Common myeloid progenitor, CD34-positive (primary cell): ENCODE measurements at regions of chr4 and their contacts with region 1.

Region 1: GRCh38 chr4:101187841-101188240 is 159.5 kb downstream of the PPP3CA start:
- DNase-seq: peak; percentile 25 to 40 (median 40)
- H3K4me3 ChIP-seq: no peak overlapping the region
- H3K27ac ChIP-seq: no peak overlapping the region
- H3K4me1 ChIP-seq: peaks cover 0 to 6% (median 3%) of the 10 kb centered on the region in 4 experiments
- H3K27me3 ChIP-seq: no peaks in the 10 kb centered on the region

Region 2: DNA sequence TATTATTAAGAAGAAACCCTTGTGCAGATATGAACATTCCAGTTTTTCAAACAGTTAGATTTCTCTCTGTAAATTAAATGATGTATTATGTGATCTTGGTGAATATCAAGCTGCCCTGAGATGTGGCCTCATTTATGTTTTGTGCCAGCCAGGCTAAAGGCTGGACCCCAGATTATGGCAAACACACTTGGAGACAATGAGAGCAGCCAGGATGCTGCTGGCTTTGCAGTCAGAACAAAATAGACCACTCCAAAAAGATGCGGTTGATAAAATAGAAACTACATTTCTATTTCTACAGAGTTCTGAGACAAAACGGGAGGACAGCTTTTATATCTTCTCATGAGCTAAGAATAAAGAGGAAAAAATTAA is 137.0 kb before region 1 on chr4:
- CTCF ChIA-PET with region 1: no interaction called
- POLR2A ChIA-PET with region 1: no interaction called
- DNase-seq: no peak
- H3K4me3 ChIP-seq: no peak overlapping the region
- H3K27ac ChIP-seq: no peak overlapping the region
- H3K4me1 ChIP-seq: no peaks in the 10 kb centered on the region
- H3K27me3 ChIP-seq: no peaks in the 10 kb centered on the region

Region 3: DNA sequence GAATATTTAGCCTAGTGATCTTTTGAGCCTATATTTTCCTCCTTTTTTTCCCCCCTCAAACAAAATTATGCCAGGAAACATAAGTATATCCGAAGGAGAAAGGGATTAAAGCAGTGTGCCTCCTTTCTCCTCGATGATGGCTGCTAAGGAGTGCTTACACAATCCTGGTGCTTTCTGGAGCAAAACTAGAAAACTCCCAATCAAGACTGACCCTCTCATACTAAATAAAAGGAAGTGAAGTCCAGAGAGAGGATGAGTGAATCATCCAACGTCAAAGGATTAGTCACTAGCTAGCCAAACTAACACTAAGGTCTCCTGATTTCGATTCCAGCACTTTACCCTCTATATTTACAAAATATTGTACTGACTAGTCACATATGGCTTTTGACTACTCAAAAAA is 12.7 kb after region 1 on chr4:
- CTCF ChIA-PET with region 1: interaction called, 11 read pairs
- POLR2A ChIA-PET with region 1: no interaction called
- DNase-seq: peak in 2 of 3 donors; percentile 49 to 57
- H3K4me3 ChIP-seq: no peak overlapping the region
- H3K27ac ChIP-seq: no peak overlapping the region
- H3K4me1 ChIP-seq: peaks cover 0 to 11% (median 3%) of the 10 kb centered on the region in 4 experiments
- H3K27me3 ChIP-seq: no peaks in the 10 kb centered on the region